ENCODE measurements at regions of chr1 and their contacts with region 1.

Region 1: GRCh38 chr1:35202048-35202719 is 9.2 kb upstream of the SFPQ start:
- DNase-seq: peak in 2 of 3 donors; percentile 58 to 75
- ATAC-seq: peak; percentile 96 to 97
- H3K4me3 ChIP-seq: no peak overlapping the region
- H3K27ac ChIP-seq: no peak overlapping the region
- H3K4me1 ChIP-seq: no peaks in the 10 kb centered on the region
- H3K27me3 ChIP-seq: no peaks in the 10 kb centered on the region

Region 2: GRCh38 chr1:35120458-35121133 is 81.6 kb before region 1 on chr1:
- intact Hi-C with region 1: no loop called
- DNase-seq: peak in 2 of 3 donors; percentile 23 to 65
- ATAC-seq: peak; percentile 72 to 76
- H3K4me3 ChIP-seq: peak overlapping the region; percentile 56
- H3K27ac ChIP-seq: no peak overlapping the region
- H3K4me1 ChIP-seq: no peaks in the 10 kb centered on the region
- H3K27me3 ChIP-seq: no peaks in the 10 kb centered on the region

Region 3: DNA sequence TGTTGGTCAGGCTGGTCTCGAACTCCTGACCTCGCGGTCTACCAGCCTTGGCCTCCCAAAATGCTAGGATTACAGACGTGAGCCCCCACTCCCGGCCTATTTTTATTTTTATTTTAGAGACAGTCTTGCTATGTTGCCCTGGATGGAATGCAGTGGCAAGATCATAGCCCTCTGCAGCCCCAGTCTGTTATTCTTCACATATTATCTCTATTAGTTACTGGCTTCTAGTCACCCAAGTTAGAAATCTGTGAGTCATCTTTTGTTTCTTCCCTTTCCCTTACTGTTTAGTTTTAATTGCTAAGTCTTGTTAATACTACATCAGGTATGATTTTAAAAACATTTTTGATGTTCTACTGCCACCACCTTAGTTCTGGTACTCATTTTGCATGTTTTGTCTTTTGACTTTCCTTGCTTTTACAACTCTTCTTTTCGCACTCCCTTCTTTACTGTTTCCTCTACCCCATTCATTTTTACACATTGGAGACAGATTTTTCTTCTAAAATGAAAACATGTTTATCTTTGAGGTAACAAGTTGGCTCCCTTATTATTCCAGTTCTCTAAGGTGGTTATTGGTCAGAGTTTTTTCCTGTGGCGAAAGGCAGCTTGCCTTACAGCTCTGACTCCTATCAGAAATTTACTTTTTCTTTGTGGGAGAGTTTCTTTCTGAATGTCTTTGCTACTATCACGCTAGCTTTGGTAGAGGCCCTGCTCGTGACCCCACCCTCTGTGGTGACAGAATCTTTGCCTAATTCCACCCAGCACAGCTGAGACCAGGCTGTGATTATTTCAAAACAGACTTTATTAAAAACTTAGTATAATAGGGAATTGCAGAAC is 85.8 kb after region 1 on chr1:
- intact Hi-C with region 1: loop called (anchors 5 to 10 kb)
- DNase-seq: no peak
- ATAC-seq: peak in 1 of 2 donors; percentile 55
- H3K4me3 ChIP-seq: no peak overlapping the region
- H3K27ac ChIP-seq: no peak overlapping the region
- H3K4me1 ChIP-seq: no peaks in the 10 kb centered on the region
- H3K27me3 ChIP-seq: no peaks in the 10 kb centered on the region

Region 4: GRCh38 chr1:35298464-35298863 is 96.3 kb after region 1 on chr1:
- intact Hi-C with region 1: loop called in 3 of 4 experiments (anchors 5 to 10 kb)
- DNase-seq: no peak
- ATAC-seq: peak; percentile 63 to 74
- H3K4me3 ChIP-seq: no peak overlapping the region
- H3K27ac ChIP-seq: no peak overlapping the region
- H3K4me1 ChIP-seq: no peaks in the 10 kb centered on the region
- H3K27me3 ChIP-seq: no peaks in the 10 kb centered on the region

Measured in right cardiac atrium (tissue), 5 donors.